ENCODE measurements at regions of chr1 and their contacts with region 1.

Region 1: DNA sequence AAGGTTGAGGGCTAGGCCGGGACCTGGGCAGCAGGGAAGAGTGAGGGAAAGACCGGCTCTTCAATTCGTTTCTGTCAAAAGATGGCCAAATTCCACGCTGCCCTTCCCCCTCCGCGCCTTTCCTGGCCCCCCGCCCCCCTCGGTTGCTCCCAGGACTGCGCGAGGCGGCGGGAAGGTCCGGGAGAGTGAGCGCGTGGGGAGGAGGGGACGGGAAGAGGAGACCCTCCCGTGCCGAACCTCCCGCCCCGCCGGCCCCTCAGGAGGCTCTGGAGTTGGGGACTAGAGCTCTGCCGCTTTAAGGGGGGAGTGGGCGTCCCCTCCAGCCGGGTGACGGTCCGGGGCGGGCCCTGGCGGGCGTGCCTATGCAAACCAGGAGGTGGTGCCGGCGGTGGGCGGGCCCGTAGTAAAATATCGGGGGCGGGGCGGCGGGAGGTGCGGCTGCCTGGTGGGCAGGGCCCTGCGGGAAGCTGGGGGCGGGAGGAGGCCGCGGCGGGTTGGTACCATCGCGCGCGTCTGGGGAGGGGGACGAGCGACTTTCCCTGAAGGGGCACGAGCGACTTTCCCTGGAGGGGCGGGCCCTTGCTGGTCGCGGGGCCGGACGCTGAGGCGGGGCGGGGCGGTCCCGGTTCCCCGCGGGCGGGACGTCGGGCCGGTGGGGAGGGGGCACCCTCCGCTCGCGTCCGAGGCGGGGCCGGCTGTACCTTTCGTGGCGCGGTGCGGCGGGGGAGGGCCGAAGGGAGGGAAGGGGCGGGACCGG is 58.2 kb downstream of the BCL9 start:
- DNase-seq: peak; percentile 95 to 99 (median 98)
- H3K4me3 ChIP-seq: peak overlapping the region; percentile 52 to 94 (median 80)
- H3K27ac ChIP-seq: no peak overlapping the region
- H3K4me1 ChIP-seq: peaks cover 7 to 18% (median 17%) of the 10 kb centered on the region in 4 experiments
- H3K27me3 ChIP-seq: peaks cover 3 to 21% (median 6%) of the 10 kb centered on the region in 5 experiments

Region 2: GRCh38 chr1:147504801-147505311 is 94.7 kb before region 1 on chr1:
- CTCF ChIA-PET with region 1: no interaction called
- POLR2A ChIA-PET with region 1: no interaction called
- DNase-seq: no peak
- H3K4me3 ChIP-seq: no peak overlapping the region
- H3K27ac ChIP-seq: no peak overlapping the region
- H3K4me1 ChIP-seq: no peaks in the 10 kb centered on the region
- H3K27me3 ChIP-seq: peaks cover 0 to 2% (median 0%) of the 10 kb centered on the region in 5 experiments

Region 3: GRCh38 chr1:147541672-147542568 is 57.6 kb before region 1 on chr1:
- CTCF ChIA-PET with region 1: interaction called, 10 read pairs
- POLR2A ChIA-PET with region 1: interaction called, 5 read pairs
- DNase-seq: peak in 2 of 3 donors; percentile 5 to 30
- H3K4me3 ChIP-seq: peak overlapping the region; percentile 38 to 88 (median 74)
- H3K27ac ChIP-seq: peak overlapping the region in 1 of 2 experiments; percentile 36
- H3K4me1 ChIP-seq: peaks cover 9 to 43% (median 31%) of the 10 kb centered on the region in 4 experiments
- H3K27me3 ChIP-seq: peaks cover 0 to 3% (median 0%) of the 10 kb centered on the region in 5 experiments

Measured in common myeloid progenitor, CD34-positive (primary cell).